ENCODE measurements at regions of chr7 and their contacts with region 1.

Region 1: GRCh38 chr7:151351027-151351426 is 9.4 kb downstream of the NUB1 start:
- DNase-seq: peak in 1 of 3 donors; percentile 14
- H3K4me3 ChIP-seq: no peak overlapping the region
- H3K4me3 Mint-ChIP-seq: no peak overlapping the region
- H3K27ac ChIP-seq: peak overlapping the region in 1 of 2 donors; percentile 75
- H3K27ac Mint-ChIP-seq: peak overlapping the region in 5 of 7 donors; percentile 81 to 91 (median 88)
- H3K4me1 ChIP-seq: peaks cover 27 to 29% of the 10 kb centered on the region in 2 donors
- H3K4me1 Mint-ChIP-seq: peaks cover 28% of the 10 kb centered on the region
- H3K27me3 ChIP-seq: no peaks in the 10 kb centered on the region
- H3K27me3 Mint-ChIP-seq: peaks cover 0 to 3% (median 2%) of the 10 kb centered on the region in 3 donors
- CTCF ChIP-seq: no peak

Region 2: GRCh38 chr7:151226875-151227782 is 123.9 kb before region 1 on chr7 and contains the start of gene ABCF2:
- intact Hi-C with region 1: loop called in 1 of 2 experiments (anchors 5 kb)
- DNase-seq: peak; percentile 97 to 98 (median 98)
- H3K4me3 ChIP-seq: peak within 1 kb of the TSS; percentile 47 to 94 (median 66)
- H3K4me3 Mint-ChIP-seq: peak within 1 kb of the TSS; percentile 93 to 96
- H3K27ac ChIP-seq: peak within 1 kb of the TSS; percentile 51 to 85
- H3K27ac Mint-ChIP-seq: peak within 1 kb of the TSS; percentile 90 to 97 (median 93)
- H3K4me1 ChIP-seq: peaks cover 29 to 34% of the 10 kb centered on the region in 2 donors
- H3K4me1 Mint-ChIP-seq: peaks cover 34% of the 10 kb centered on the region
- H3K27me3 ChIP-seq: no peaks in the 10 kb centered on the region
- H3K27me3 Mint-ChIP-seq: peaks cover 0 to 3% (median 1%) of the 10 kb centered on the region in 3 donors
- CTCF ChIP-seq: no peak
- polyA plus RNA-seq, gene ABCF2: 18.0 to 22.0 (median 21.1) TPM

Region 3: DNA sequence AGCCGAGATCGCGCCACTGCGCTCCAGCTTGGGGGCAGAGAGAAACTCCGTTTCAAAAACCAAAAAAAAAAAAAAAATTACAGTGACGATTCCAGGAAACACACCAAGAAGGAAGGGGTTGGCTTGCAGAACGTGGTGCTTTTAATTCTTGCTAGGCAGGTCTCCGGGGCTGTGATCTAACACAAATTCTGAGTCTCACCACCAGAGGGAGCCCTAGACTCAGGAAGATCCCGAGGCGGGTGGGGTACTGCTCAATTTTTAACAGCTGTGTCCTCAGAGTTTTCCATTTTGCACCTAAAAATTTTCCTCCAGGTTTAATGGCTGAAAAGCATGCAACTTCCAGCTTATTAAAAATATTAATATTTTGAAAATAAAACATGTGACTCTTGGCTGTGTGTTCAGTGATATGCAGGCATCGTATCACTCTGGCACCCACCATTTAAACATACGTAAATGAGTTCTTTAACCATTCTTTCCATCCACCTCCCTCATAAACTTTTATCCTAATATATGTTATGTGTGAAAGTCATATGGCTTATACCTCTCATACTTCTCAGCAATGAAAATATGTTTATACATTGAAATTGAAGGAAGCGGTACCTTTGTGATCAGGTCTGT is 35.9 kb before region 1 on chr7:
- intact Hi-C with region 1: loop called (anchors 2 kb)
- DNase-seq: peak; percentile 55 to 73 (median 69)
- H3K4me3 ChIP-seq: no peak overlapping the region
- H3K4me3 Mint-ChIP-seq: peak overlapping the region in 1 of 2 donors; percentile 81
- H3K27ac ChIP-seq: no peak overlapping the region
- H3K27ac Mint-ChIP-seq: no peak overlapping the region
- H3K4me1 ChIP-seq: peaks cover 3 to 4% of the 10 kb centered on the region in 2 donors
- H3K4me1 Mint-ChIP-seq: peaks cover 6% of the 10 kb centered on the region
- H3K27me3 ChIP-seq: no peaks in the 10 kb centered on the region
- H3K27me3 Mint-ChIP-seq: peaks cover 0 to 8% (median 0%) of the 10 kb centered on the region in 3 donors
- CTCF ChIP-seq: peak; percentile 92

Measured in CD14-positive monocyte (primary cell).